Gastrocnemius medialis (tissue), 4 donors: ENCODE measurements at regions of chr5 and their contacts with region 1.

Region 1: DNA sequence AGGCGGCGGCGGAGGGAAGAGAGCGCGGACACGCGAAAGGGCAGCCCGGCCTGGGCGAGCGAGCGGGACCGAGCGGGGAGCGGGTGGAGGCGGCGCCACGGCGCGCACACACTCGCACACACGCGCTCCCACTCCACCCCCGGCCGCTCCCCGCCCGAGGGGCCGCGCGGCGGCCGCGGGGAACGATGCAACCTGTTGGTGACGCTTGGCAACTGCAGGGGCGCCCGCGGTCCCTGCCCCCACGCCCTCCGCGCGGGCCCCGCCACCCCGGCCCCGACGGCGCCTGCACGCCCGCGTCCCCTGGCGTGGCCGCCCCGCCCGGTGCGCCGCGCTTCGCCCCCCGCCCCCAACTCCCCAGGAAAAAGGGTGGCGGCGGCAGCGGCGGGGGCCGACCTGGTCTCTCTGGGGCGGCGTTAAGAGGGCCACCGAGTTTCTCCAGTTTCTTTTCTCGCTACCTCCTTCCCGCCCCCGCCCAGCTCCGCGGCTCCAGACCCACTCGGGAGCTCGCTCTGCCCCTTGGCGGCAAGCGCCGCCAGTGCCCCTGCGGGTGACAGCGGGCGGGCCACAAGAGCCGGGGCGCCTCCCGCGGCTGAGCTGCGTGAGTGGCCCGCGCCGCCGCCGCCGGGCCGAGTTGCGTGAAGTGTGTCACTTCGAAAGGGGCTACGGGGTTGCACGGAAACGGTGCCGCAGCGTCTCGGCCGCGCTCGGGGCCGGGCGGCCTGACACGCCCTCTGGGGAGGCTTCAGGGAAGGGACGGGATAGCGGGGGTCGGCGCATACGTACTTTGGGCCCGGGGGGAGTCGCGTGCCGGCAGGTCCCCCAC is at the start of gene NR3C1:
- DNase-seq: peak; percentile 82 to 88
- ATAC-seq: peak; percentile 56 to 58
- H3K4me3 ChIP-seq: peak within 1 kb of the TSS; percentile 80 to 92 (median 86)
- H3K27ac ChIP-seq: peak within 1 kb of the TSS; percentile 99 to 100 (median 99)
- H3K4me1 ChIP-seq: peaks cover 11 to 21% of the 10 kb centered on the region in 2 donors
- H3K27me3 ChIP-seq: no peaks in the 10 kb centered on the region
- CTCF ChIP-seq: peak; percentile 37 to 79 (median 75)
- POLR2A ChIP-seq: peak; percentile 77 to 85
- total RNA-seq, gene NR3C1: 56.7 to 79.1 (median 64.4) TPM

Region 2: GRCh38 chr5:142769741-142770631 is 633.8 kb before region 1 on chr5 and contains the start of gene ARHGAP26:
- in situ Hi-C with region 1: no loop called
- intact Hi-C with region 1: loop called (anchors 10 kb)
- DNase-seq: peak; percentile 96 to 97
- ATAC-seq: peak; percentile 91 to 92
- H3K4me3 ChIP-seq: peak within 1 kb of the TSS; percentile 78 to 91 (median 88)
- H3K27ac ChIP-seq: peak within 1 kb of the TSS; percentile 71 to 85 (median 76)
- H3K4me1 ChIP-seq: peaks cover 30 to 31% of the 10 kb centered on the region in 2 donors
- H3K27me3 ChIP-seq: no peaks in the 10 kb centered on the region
- CTCF ChIP-seq: peak in 3 of 5 experiments; percentile 12 to 27 (median 17)
- POLR2A ChIP-seq: peak; percentile 99 to 100
- total RNA-seq, gene ARHGAP26: 9.1 to 22.4 (median 13.4) TPM

Region 3: DNA sequence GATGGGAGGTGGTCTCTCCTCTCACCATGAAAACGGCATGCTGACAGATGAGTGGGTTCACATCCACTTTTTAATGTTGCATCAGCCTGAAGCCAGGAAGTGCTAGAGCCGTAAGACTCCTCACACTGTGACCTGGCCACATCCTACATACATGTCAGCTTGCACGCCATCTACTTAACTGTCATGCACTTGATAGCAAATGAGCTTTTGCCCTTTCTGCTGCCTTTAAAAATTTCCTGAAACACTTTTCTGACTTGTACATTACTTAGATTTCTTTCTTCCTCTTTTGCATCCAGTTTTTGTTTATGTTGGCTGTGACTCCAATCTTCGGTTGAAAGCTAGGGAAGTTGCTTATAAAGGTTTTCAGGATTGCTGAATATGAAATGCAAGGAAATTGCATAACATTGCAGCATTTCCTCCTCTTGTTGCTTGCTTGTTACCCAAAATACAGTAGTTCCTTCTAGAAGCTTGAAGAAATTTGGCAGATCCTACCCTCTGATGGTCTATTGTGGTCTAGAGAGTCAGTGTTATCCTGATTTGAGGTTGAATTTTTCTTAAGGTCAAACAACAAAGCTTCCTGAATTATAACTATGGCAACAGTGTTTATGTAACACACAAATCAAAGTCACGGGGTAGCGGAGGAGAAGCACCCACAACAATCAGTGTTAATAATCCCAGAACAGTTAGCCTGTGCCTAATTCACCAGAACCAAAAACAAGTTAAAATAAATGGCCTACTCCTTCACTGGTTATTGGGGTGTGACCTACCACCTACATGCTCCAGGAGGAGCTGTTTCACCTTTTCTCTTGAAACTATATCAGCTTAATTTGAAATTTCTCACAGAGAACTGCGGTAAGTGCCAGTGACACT is 401.1 kb before region 1 on chr5:
- in situ Hi-C with region 1: loop called in 2 of 4 experiments (anchors 10 to 25 kb)
- intact Hi-C with region 1: no loop called
- DNase-seq: no peak
- ATAC-seq: peak; percentile 58 to 72
- H3K4me3 ChIP-seq: no peak overlapping the region
- H3K27ac ChIP-seq: peak overlapping the region; percentile 52 to 76 (median 54)
- H3K4me1 ChIP-seq: peaks cover 38 to 39% of the 10 kb centered on the region in 2 donors
- H3K27me3 ChIP-seq: no peaks in the 10 kb centered on the region
- CTCF ChIP-seq: peak; percentile 49 to 69 (median 60)
- POLR2A ChIP-seq: peak in 1 of 2 donors; percentile 7

Region 4: GRCh38 chr5:143041972-143042770 is 361.6 kb before region 1 on chr5:
- in situ Hi-C with region 1: loop called in 1 of 4 experiments (anchors 5 kb)
- intact Hi-C with region 1: no loop called
- DNase-seq: peak; percentile 81 to 89
- ATAC-seq: peak; percentile 92 to 93
- H3K4me3 ChIP-seq: peak overlapping the region in 1 of 4 donors; percentile 2
- H3K27ac ChIP-seq: peak overlapping the region; percentile 88 to 91 (median 89)
- H3K4me1 ChIP-seq: peaks cover 15 to 24% of the 10 kb centered on the region in 2 donors
- H3K27me3 ChIP-seq: no peaks in the 10 kb centered on the region
- CTCF ChIP-seq: no peak
- POLR2A ChIP-seq: peak; percentile 50 to 55

Region 5: GRCh38 chr5:143134900-143135299 is 268.9 kb before region 1 on chr5:
- in situ Hi-C with region 1: loop called in 1 of 4 experiments (anchors 25 kb)
- intact Hi-C with region 1: loop called (anchors 2 kb)
- DNase-seq: peak in 1 of 2 donors; percentile 50
- ATAC-seq: peak; percentile 3 to 14
- H3K4me3 ChIP-seq: peak overlapping the region in 2 of 4 donors; percentile 47 to 50
- H3K27ac ChIP-seq: peak overlapping the region; percentile 90 to 97 (median 95)
- H3K4me1 ChIP-seq: peaks cover 90 to 92% of the 10 kb centered on the region in 2 donors
- H3K27me3 ChIP-seq: no peaks in the 10 kb centered on the region
- CTCF ChIP-seq: no peak
- POLR2A ChIP-seq: peak; percentile 22 to 29

Region 6: GRCh38 chr5:143195491-143195890 is 208.3 kb before region 1 on chr5:
- in situ Hi-C with region 1: no loop called
- intact Hi-C with region 1: loop called (anchors 5 kb)
- DNase-seq: no peak
- ATAC-seq: peak; percentile 70 to 86
- H3K4me3 ChIP-seq: no peak overlapping the region
- H3K27ac ChIP-seq: peak overlapping the region in 3 of 4 donors; percentile 24 to 29 (median 24)
- H3K4me1 ChIP-seq: peaks cover 30 to 33% of the 10 kb centered on the region in 2 donors
- H3K27me3 ChIP-seq: no peaks in the 10 kb centered on the region
- CTCF ChIP-seq: no peak
- POLR2A ChIP-seq: no peak

Region 7: DNA sequence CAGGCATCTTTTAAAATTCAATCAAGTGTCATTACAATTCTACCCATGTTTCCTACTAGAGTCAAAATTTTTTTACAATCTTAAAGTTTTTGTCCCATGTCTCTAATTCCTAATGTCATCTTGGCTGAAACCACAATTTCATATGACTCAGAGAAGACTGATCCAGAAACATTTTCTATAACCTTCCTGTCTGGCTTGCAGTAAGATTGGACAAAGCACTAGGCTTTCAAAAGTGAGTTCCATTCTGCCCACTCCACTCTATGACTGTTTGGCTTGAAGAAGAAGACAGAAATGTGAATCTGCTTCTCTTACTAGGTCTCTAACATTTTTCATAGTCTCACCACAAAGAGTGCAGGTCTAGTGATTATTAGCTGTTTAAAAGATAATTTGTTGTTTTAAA is 89.1 kb before region 1 on chr5:
- in situ Hi-C with region 1: no loop called
- intact Hi-C with region 1: loop called (anchors 5 kb)
- DNase-seq: no peak
- ATAC-seq: peak in 1 of 2 donors; percentile 29
- H3K4me3 ChIP-seq: no peak overlapping the region
- H3K27ac ChIP-seq: peak overlapping the region; percentile 85 to 89 (median 86)
- H3K4me1 ChIP-seq: peaks cover 77% of the 10 kb centered on the region in 2 donors
- H3K27me3 ChIP-seq: no peaks in the 10 kb centered on the region
- CTCF ChIP-seq: no peak
- POLR2A ChIP-seq: no peak